SK-N-SH (cell line): ENCODE measurements at regions of chr2 and their contacts with region 1.

Region 1: GRCh38 chr2:21042958-21043743 is 722 bp downstream of the APOB start:
- DNase-seq: peak; percentile 91
- H3K4me3 ChIP-seq: peak overlapping the region in 1 of 2 experiments; percentile 41; a peak in 1 of 4 replicates
- H3K27ac ChIP-seq: no peak overlapping the region
- H3K4me1 ChIP-seq: peaks cover 0 to 23% of the 10 kb centered on the region in 2 experiments; a peak in 2 of 4 replicates
- H3K27me3 ChIP-seq: no peaks in the 10 kb centered on the region; the same call in 1 of the 2 replicates
- CTCF ChIP-seq: peak; percentile 100
- EP300 ChIP-seq: no peak
- RAD21 ChIP-seq: peak; percentile 100

Region 2: DNA sequence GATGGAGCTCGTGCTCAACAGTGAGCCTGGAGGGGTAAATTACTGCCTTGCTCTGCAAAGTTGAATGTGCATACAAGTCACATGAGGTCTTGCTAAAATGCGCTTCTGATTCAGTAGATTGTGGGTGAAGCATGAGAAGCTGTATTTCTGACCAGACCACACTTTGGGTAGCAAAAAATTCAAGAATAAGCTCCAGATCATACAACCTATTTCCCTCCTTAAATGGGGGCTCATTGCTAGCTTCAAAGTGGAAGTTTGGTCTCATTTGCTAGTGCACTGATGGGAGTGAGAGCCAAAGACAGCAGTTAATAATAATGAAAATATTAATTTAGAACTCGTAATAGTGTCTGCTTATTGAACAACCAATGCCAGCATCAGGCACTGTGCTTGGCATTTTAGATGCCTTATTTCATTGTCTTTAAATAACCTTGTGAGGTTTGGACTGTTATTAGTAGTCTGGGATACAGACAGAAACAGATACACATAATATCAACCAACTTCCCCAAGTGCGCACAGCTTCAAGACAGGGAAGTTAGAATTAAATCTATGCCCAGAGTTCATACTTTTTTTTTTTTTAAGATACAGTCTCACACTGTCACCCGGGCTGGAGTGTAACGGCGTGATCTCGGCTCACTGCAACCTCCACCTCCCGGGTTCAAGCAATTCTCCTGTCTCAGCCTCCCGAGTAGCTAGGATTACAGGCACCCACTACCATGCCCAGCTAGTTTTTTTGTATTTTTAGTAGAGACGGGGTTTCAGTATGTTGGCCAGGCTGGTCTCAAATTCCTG is 17.3 kb before region 1 on chr2:
- CTCF ChIA-PET with region 1: interaction called, 51 read pairs
- POLR2A ChIA-PET with region 1: interaction called, 4 read pairs
- DNase-seq: no peak
- H3K4me3 ChIP-seq: no peak overlapping the region
- H3K27ac ChIP-seq: no peak overlapping the region
- H3K4me1 ChIP-seq: no peaks in the 10 kb centered on the region
- H3K27me3 ChIP-seq: no peaks in the 10 kb centered on the region; the same call in 1 of the 2 replicates
- CTCF ChIP-seq: no peak
- EP300 ChIP-seq: no peak
- RAD21 ChIP-seq: no peak

Region 3: DNA sequence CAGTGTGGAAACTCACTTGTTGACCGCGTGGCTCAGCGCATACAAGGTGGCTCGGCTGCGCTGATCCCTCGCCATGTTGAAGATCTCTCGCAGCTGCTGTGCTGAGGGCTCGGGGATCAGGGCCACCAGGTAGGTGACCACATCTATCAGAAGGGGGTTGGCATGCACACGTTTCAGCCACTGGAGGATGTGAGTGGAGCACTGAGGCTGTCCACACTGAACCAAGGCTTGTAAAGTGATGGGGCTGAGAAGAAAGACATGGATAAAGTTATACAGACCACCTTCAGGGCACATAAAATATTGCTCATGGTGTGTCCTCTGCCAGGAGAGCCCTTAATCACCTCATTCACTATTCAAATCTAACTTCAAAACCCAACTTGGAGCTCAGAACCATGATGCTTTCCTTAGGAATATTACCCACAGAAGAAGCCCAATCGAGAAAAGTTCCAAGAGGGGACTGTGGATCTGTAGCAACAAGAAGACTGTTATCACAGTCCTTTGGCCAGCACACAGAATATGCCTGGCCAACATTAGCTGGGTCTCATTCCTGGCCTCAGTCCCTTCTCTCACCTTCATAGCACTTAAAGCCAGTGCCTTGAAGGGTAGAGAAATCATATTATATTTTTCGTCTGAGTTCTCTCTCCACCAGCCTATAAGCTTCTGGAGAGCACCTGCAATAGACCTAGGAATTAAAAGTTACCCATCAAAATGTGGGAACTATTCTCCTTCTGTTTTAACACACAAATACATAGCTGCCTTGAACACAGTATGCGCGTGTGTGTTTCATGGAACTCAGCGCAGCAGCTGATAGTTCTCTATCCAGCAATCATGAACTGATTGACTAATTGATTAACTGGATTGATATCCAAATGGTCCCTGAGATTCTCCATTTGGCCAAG is 10.6 kb before region 1 on chr2:
- CTCF ChIA-PET with region 1: interaction called, 51 read pairs
- POLR2A ChIA-PET with region 1: no interaction called
- DNase-seq: no peak
- H3K4me3 ChIP-seq: no peak overlapping the region
- H3K27ac ChIP-seq: no peak overlapping the region
- H3K4me1 ChIP-seq: no peaks in the 10 kb centered on the region
- H3K27me3 ChIP-seq: no peaks in the 10 kb centered on the region
- CTCF ChIP-seq: no peak
- EP300 ChIP-seq: no peak
- RAD21 ChIP-seq: no peak

Region 4: DNA sequence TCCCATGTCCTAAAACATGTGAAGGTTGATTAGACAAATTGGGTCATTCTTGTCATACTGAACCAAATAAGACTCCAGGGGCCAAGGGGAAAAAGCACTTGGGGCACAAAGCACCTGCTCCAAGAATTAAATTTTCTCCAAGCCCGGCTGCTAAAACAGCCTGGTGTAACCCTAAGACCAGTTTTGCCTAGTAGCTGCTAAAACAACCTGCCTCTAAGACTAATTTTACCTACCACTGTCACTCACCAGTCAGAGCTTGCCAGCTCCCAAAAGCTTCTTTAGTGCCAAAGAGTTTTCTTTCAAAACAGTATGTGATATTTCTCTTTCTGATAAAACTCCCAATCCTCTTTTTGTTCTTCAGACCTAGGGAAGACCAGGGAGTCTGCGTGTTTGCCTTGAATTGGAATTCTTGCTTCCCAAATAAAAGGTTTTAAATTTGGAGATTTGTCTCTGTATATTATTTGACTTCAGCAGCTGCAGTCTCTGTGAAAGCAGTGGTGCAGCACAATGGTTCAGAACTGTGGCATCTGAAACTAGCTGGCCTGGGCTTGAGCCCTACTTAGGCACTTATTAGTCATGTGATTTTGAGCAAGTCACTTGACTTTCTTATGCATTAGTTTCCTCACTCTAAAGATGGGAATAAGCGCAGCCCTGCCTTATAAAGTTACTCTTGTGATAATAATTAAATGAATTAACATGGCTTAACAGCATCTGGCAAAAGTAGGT is 16.9 kb after region 1 on chr2:
- CTCF ChIA-PET with region 1: interaction called, 31 read pairs
- POLR2A ChIA-PET with region 1: no interaction called
- DNase-seq: no peak
- H3K4me3 ChIP-seq: no peak overlapping the region
- H3K27ac ChIP-seq: no peak overlapping the region
- H3K4me1 ChIP-seq: peaks cover 0 to 3% of the 10 kb centered on the region in 2 experiments; a peak in 2 of 4 replicates
- H3K27me3 ChIP-seq: no peaks in the 10 kb centered on the region
- CTCF ChIP-seq: no peak
- EP300 ChIP-seq: no peak
- RAD21 ChIP-seq: no peak

Region 5: GRCh38 chr2:21070341-21071257 is 27.4 kb after region 1 on chr2:
- CTCF ChIA-PET with region 1: interaction called, 22 read pairs
- POLR2A ChIA-PET with region 1: no interaction called
- DNase-seq: peak; percentile 42
- H3K4me3 ChIP-seq: no peak overlapping the region
- H3K27ac ChIP-seq: peak overlapping the region in 1 of 2 experiments; percentile 89; a peak in 1 of 4 replicates
- H3K4me1 ChIP-seq: peaks cover 0 to 19% of the 10 kb centered on the region in 2 experiments; a peak in 2 of 4 replicates
- H3K27me3 ChIP-seq: no peaks in the 10 kb centered on the region
- CTCF ChIP-seq: no peak
- EP300 ChIP-seq: peak in 1 of 2 experiments; percentile 83; a peak in 2 of 4 replicates
- RAD21 ChIP-seq: no peak

Region 6: GRCh38 chr2:21165350-21165749 is 122.2 kb after region 1 on chr2:
- CTCF ChIA-PET with region 1: interaction called, 47 read pairs
- POLR2A ChIA-PET with region 1: interaction called, 4 read pairs
- DNase-seq: peak; percentile 34
- H3K4me3 ChIP-seq: no peak overlapping the region
- H3K27ac ChIP-seq: no peak overlapping the region
- H3K4me1 ChIP-seq: no peaks in the 10 kb centered on the region; a peak in 1 of 4 replicates
- H3K27me3 ChIP-seq: no peaks in the 10 kb centered on the region
- CTCF ChIP-seq: peak; percentile 44
- EP300 ChIP-seq: no peak
- RAD21 ChIP-seq: peak; percentile 67